Caco-2 (cell line): ENCODE measurements at regions of chr15 and their contacts with region 1.

Region 1: GRCh38 chr15:40252438-40253166 is 13.7 kb downstream of the PAK6 start:
- DNase-seq: peak in 1 of 2 experiments; percentile 69
- H3K4me3 ChIP-seq: peak overlapping the region; percentile 58
- H3K4me3 Mint-ChIP-seq: peak overlapping the region; percentile 86
- H3K27ac Mint-ChIP-seq: peak overlapping the region; percentile 56
- H3K4me1 ChIP-seq: peaks cover 17% of the 10 kb centered on the region
- H3K4me1 Mint-ChIP-seq: peaks cover 8% of the 10 kb centered on the region
- H3K27me3 ChIP-seq: no peaks in the 10 kb centered on the region
- H3K27me3 Mint-ChIP-seq: no peaks in the 10 kb centered on the region
- CTCF ChIP-seq: no peak

Region 2: GRCh38 chr15:40238532-40239403 is 13.8 kb before region 1 on chr15 and contains the start of gene PAK6:
- CTCF ChIA-PET with region 1: interaction called, 5 read pairs
- POLR2A ChIA-PET with region 1: no interaction called
- intact Hi-C with region 1: loop called (anchors 2 kb)
- DNase-seq: peak; percentile 77 to 80
- H3K4me3 ChIP-seq: peak within 1 kb of the TSS; percentile 33
- H3K4me3 Mint-ChIP-seq: peak within 1 kb of the TSS; percentile 58
- H3K27ac Mint-ChIP-seq: peak within 1 kb of the TSS; percentile 51
- H3K4me1 ChIP-seq: peaks cover 7% of the 10 kb centered on the region
- H3K4me1 Mint-ChIP-seq: no peaks in the 10 kb centered on the region
- H3K27me3 ChIP-seq: no peaks in the 10 kb centered on the region
- H3K27me3 Mint-ChIP-seq: no peaks in the 10 kb centered on the region
- CTCF ChIP-seq: no peak
- total RNA-seq, gene PAK6: 19.9 and 20.7 TPM in 2 replicates